Panc1 (cell line): ENCODE measurements at regions of chr4 and their contacts with region 1.

Region 1: DNA sequence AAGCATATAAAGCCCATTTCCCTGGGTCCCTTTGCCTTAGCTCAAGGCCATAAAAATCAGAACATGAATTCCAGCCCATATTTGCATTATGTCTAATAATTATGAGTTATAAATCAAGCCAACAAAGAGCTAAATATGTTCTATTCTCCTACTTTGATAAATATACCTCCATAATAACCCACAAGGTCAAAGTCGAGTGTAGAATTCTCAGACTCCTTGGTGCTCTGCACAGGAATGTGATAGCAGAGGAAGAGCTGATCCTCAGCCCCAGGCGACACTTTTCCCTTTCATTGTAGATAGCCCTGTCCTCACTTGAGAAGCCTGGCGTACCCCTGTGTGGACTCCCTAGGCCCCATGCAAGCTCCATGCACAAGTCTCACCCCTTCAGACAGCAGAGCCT is 85.6 kb downstream of the CASP3 start:
- DNase-seq: no peak
- ATAC-seq: no peak
- H3K4me3 ChIP-seq: no peak overlapping the region
- H3K27ac ChIP-seq: no peak overlapping the region
- H3K4me1 ChIP-seq: no peaks in the 10 kb centered on the region
- H3K27me3 ChIP-seq: no peaks in the 10 kb centered on the region
- CTCF ChIP-seq: no peak

Region 2: DNA sequence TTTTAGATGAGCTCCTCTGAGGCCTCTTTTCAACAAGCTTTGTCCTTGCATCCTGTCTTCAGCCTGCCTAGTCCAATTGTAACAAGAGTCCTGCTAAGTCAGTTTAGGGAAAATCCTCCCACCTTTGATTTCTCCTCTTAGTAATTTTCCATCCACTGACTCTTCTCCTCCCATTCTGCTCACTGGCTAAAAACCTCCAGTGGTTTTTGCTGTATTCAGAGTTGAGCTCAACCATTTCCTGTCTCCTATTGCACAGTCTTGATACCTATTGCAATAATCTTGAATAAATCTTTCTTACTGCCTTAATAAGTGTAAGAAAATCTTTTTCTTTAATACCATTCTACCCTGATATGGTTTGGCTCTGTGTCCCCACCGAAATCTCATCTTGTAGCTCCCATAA is 228.1 kb before region 1 on chr4:
- CTCF ChIA-PET with region 1: no interaction called
- POLR2A ChIA-PET with region 1: no interaction called
- in situ Hi-C with region 1: no loop called
- intact Hi-C with region 1: no loop called
- DNase-seq: no peak
- ATAC-seq: no peak
- H3K4me3 ChIP-seq: no peak overlapping the region
- H3K27ac ChIP-seq: no peak overlapping the region
- H3K4me1 ChIP-seq: no peaks in the 10 kb centered on the region
- H3K27me3 ChIP-seq: no peaks in the 10 kb centered on the region
- CTCF ChIP-seq: no peak

Region 3: GRCh38 chr4:184649026-184649970 is 85.7 kb after region 1 on chr4 and contains the starts of genes CASP3 and PRIMPOL:
- CTCF ChIA-PET with region 1: no interaction called
- POLR2A ChIA-PET with region 1: interaction called, 10 read pairs
- in situ Hi-C with region 1: no loop called
- intact Hi-C with region 1: no loop called
- DNase-seq: peak; percentile 41
- ATAC-seq: peak; percentile 97
- H3K4me3 ChIP-seq: peak within 1 kb of the TSS; percentile 69 to 76
- H3K27ac ChIP-seq: peak within 1 kb of the TSS; percentile 93
- H3K4me1 ChIP-seq: peaks cover 12% of the 10 kb centered on the region
- H3K27me3 ChIP-seq: no peaks in the 10 kb centered on the region
- CTCF ChIP-seq: no peak
- total RNA-seq, gene CASP3: 24.3 TPM
- total RNA-seq, gene PRIMPOL: 11.7 TPM

Region 4: GRCh38 chr4:184745831-184746795 is 182.5 kb after region 1 on chr4:
- CTCF ChIA-PET with region 1: no interaction called
- POLR2A ChIA-PET with region 1: interaction called, 10 read pairs
- in situ Hi-C with region 1: no loop called
- intact Hi-C with region 1: no loop called
- DNase-seq: peak; percentile 43
- ATAC-seq: peak; percentile 87
- H3K4me3 ChIP-seq: no peak overlapping the region
- H3K27ac ChIP-seq: no peak overlapping the region
- H3K4me1 ChIP-seq: no peaks in the 10 kb centered on the region
- H3K27me3 ChIP-seq: no peaks in the 10 kb centered on the region
- CTCF ChIP-seq: peak; percentile 82